Activated CD8-positive, alpha-beta T cell treated with anti-CD3 and anti-CD28 coated beads, Interleukin-2, amount 10 ng/mL, durations not matched to agents 7 days and 5 days (primary cell): ENCODE measurements at regions of chr12 and their contacts with region 1.

Region 1: GRCh38 chr12:132218915-132219314 is 74.7 kb downstream of the NOC4L start:
- DNase-seq: peak; percentile 53
- ATAC-seq: peak; percentile 43
- H3K4me3 Mint-ChIP-seq: no peak overlapping the region
- H3K27ac Mint-ChIP-seq: no peak overlapping the region
- H3K4me1 Mint-ChIP-seq: peaks cover 8% of the 10 kb centered on the region
- H3K27me3 Mint-ChIP-seq: peaks cover 15% of the 10 kb centered on the region

Region 2: GRCh38 chr12:132153501-132154340 is 65.2 kb before region 1 on chr12:
- CTCF ChIA-PET with region 1: interaction called, 35 read pairs
- POLR2A ChIA-PET with region 1: interaction called, 3 read pairs
- DNase-seq: peak; percentile 83
- ATAC-seq: peak; percentile 90
- H3K4me3 Mint-ChIP-seq: no peak overlapping the region
- H3K27ac Mint-ChIP-seq: peak overlapping the region; percentile 49
- H3K4me1 Mint-ChIP-seq: peaks cover 2% of the 10 kb centered on the region
- H3K27me3 Mint-ChIP-seq: no peaks in the 10 kb centered on the region

Region 3: GRCh38 chr12:132189378-132190011 is 29.4 kb before region 1 on chr12:
- CTCF ChIA-PET with region 1: interaction called, 16 read pairs
- POLR2A ChIA-PET with region 1: no interaction called
- DNase-seq: peak; percentile 96
- ATAC-seq: peak; percentile 95
- H3K4me3 Mint-ChIP-seq: peak overlapping the region; percentile 90
- H3K27ac Mint-ChIP-seq: peak overlapping the region; percentile 86
- H3K4me1 Mint-ChIP-seq: peaks cover 50% of the 10 kb centered on the region
- H3K27me3 Mint-ChIP-seq: peaks cover 1% of the 10 kb centered on the region

Region 4: GRCh38 chr12:132205271-132206045 is 13.5 kb before region 1 on chr12:
- CTCF ChIA-PET with region 1: no interaction called
- POLR2A ChIA-PET with region 1: no interaction called
- DNase-seq: no peak
- ATAC-seq: no peak
- H3K4me3 Mint-ChIP-seq: no peak overlapping the region
- H3K27ac Mint-ChIP-seq: no peak overlapping the region
- H3K4me1 Mint-ChIP-seq: no peaks in the 10 kb centered on the region
- H3K27me3 Mint-ChIP-seq: peaks cover 15% of the 10 kb centered on the region

Region 5: GRCh38 chr12:132373901-132374611 is 155.1 kb after region 1 on chr12:
- CTCF ChIA-PET with region 1: no interaction called
- POLR2A ChIA-PET with region 1: no interaction called
- DNase-seq: no peak
- ATAC-seq: no peak
- H3K4me3 Mint-ChIP-seq: no peak overlapping the region
- H3K27ac Mint-ChIP-seq: no peak overlapping the region
- H3K4me1 Mint-ChIP-seq: no peaks in the 10 kb centered on the region
- H3K27me3 Mint-ChIP-seq: peaks cover 29% of the 10 kb centered on the region